Right ventricle myocardium superior (tissue), 1 donor: ENCODE measurements at regions of chr2 and their contacts with region 1.

Region 1: GRCh38 chr2:1910592-1911246 is 166.4 kb upstream of the PXDN start:
- DNase-seq: no peak
- ATAC-seq: peak; percentile 46

Region 2: GRCh38 chr2:1584691-1585485 is 325.8 kb before region 1 on chr2:
- intact Hi-C with region 1: no loop called
- DNase-seq: peak; percentile 26
- ATAC-seq: no peak

Region 3: DNA sequence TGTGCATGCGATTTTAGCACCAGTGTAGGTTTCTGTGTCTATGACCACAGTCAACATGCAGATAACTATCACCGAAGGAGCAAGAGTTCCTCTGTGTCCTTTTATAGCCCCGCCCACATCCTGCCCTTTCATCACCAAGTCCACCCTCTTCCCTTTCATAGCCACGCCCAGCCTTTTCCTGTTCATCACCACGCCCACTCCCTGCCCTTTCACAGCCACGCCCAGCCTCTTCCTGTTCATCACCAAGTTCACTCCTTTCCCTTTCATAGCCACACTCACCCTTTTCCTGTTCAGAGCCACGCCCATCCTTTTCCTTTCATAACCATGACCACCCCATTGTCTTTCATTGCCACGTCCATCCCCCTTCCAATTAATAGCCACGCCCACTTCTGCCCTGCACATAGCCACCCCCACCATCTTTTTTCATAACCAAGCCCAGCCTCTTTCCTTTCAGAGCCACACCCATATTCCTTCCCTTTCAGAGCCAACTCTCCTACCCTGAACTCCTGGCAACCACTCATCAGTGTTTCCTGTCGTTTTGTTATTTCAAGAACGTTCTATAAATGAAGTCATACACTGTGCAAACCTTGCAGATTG is 146.5 kb after region 1 on chr2:
- intact Hi-C with region 1: no loop called
- DNase-seq: peak; percentile 80
- ATAC-seq: peak; percentile 84

Region 4: GRCh38 chr2:2112416-2113105 is 201.8 kb after region 1 on chr2:
- intact Hi-C with region 1: loop called (anchors 10 kb)
- DNase-seq: no peak
- ATAC-seq: no peak